PC-9 (cell line): ENCODE measurements at regions of chr6 and their contacts with region 1.

Region 1: DNA sequence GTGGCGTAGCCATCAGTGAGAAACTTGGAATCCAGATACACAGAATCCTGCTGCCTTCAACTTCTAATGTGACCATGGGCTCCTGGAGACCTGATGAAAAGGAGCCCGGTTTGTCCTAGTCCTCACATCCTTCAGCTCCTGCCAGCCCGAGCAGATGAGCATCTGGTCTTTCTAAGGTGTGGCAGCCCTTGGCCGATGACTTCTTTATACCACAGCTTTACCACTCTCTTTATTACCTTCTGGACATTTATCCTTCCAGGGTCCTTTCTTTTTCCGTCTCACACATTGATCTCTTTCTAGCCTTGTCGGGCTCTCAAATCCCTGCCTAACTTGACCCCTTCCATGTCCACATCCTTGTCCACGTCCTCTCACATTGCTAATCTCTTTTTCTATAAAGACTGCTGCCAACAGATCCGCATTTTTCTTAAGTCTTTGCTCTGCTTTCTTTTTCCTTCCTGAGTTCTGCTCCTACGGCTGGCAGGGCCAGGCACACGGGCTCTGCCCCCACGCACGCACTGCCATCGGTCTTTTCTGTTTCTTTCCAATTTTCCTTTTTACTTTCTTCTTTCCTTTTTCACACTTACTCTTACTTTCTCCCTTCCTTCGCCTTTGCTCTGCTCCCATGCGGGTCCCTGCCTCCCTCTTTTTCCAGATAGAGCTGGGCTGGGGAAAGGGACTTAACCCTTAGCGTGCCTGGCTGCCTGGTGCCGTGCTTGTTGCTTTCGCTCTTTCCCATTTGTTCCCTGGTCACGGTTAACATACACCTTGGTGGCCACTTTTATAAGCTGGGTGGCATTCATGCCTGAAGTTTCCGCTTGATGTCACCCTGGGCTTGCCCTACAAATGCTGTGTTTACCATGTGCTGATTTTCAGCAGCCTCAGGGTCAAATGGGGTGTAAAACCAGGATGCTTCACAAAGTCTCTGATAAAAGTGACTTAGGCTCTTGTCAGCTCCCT is 9.4 kb upstream of the GMPR start:
- DNase-seq: no peak
- H3K4me3 ChIP-seq: no peak overlapping the region
- H3K27ac ChIP-seq: no peak overlapping the region
- H3K4me1 ChIP-seq: no peaks in the 10 kb centered on the region
- H3K27me3 ChIP-seq: peaks cover 64% of the 10 kb centered on the region
- CTCF ChIP-seq: no peak

Region 2: GRCh38 chr6:16450285-16450684 is 221.3 kb after region 1 on chr6:
- CTCF ChIA-PET with region 1: no interaction called
- POLR2A ChIA-PET with region 1: no interaction called
- intact Hi-C with region 1: no loop called
- DNase-seq: no peak
- H3K4me3 ChIP-seq: no peak overlapping the region
- H3K27ac ChIP-seq: no peak overlapping the region
- H3K4me1 ChIP-seq: no peaks in the 10 kb centered on the region
- H3K27me3 ChIP-seq: no peaks in the 10 kb centered on the region
- CTCF ChIP-seq: no peak

Region 3: GRCh38 chr6:17336425-17336824 is 1107.4 kb after region 1 on chr6:
- CTCF ChIA-PET with region 1: interaction called, 27 read pairs
- POLR2A ChIA-PET with region 1: no interaction called
- intact Hi-C with region 1: no loop called
- DNase-seq: no peak
- H3K4me3 ChIP-seq: no peak overlapping the region
- H3K27ac ChIP-seq: no peak overlapping the region
- H3K4me1 ChIP-seq: 0 out of 2 replicates have a peak, but pooled peaks cover 6% of the 10 kb centered on the region
- H3K27me3 ChIP-seq: no peaks in the 10 kb centered on the region
- CTCF ChIP-seq: no peak